ENCODE measurements at regions of chr9 and their contacts with region 1.

Region 1: GRCh38 chr9:129320575-129321263 is 142.7 kb upstream of the IER5L start:
- DNase-seq: peak; percentile 42
- ATAC-seq: peak; percentile 88
- H3K4me3 Mint-ChIP-seq: peak overlapping the region; percentile 85
- H3K27ac Mint-ChIP-seq: peak overlapping the region; percentile 52
- H3K4me1 Mint-ChIP-seq: peaks cover 13% of the 10 kb centered on the region
- H3K27me3 Mint-ChIP-seq: peaks cover 5% of the 10 kb centered on the region
- CTCF ChIP-seq: no peak

Region 2: GRCh38 chr9:129336601-129337331 is 16.0 kb after region 1 on chr9:
- CTCF ChIA-PET with region 1: no interaction called
- POLR2A ChIA-PET with region 1: interaction called, 7 read pairs
- intact Hi-C with region 1: loop called (anchors 2 kb)
- DNase-seq: peak; percentile 33
- ATAC-seq: peak; percentile 78
- H3K4me3 Mint-ChIP-seq: peak overlapping the region; percentile 75
- H3K27ac Mint-ChIP-seq: no peak overlapping the region
- H3K4me1 Mint-ChIP-seq: peaks cover 22% of the 10 kb centered on the region
- H3K27me3 Mint-ChIP-seq: peaks cover 33% of the 10 kb centered on the region
- CTCF ChIP-seq: no peak

Region 3: GRCh38 chr9:129413537-129414376 is 93.0 kb after region 1 on chr9:
- CTCF ChIA-PET with region 1: no interaction called
- POLR2A ChIA-PET with region 1: interaction called, 5 read pairs
- intact Hi-C with region 1: loop called (anchors 5 kb)
- DNase-seq: peak; percentile 99
- ATAC-seq: peak; percentile 79
- H3K4me3 Mint-ChIP-seq: peak overlapping the region; percentile 85
- H3K27ac Mint-ChIP-seq: peak overlapping the region; percentile 97
- H3K4me1 Mint-ChIP-seq: peaks cover 14% of the 10 kb centered on the region
- H3K27me3 Mint-ChIP-seq: no peaks in the 10 kb centered on the region
- CTCF ChIP-seq: no peak

Region 4: GRCh38 chr9:129610473-129611301 is 290.0 kb after region 1 on chr9:
- CTCF ChIA-PET with region 1: no interaction called
- POLR2A ChIA-PET with region 1: interaction called, 6 read pairs
- intact Hi-C with region 1: loop called (anchors 5 kb)
- DNase-seq: peak; percentile 75
- ATAC-seq: peak; percentile 82
- H3K4me3 Mint-ChIP-seq: peak overlapping the region; percentile 81
- H3K27ac Mint-ChIP-seq: peak overlapping the region; percentile 41
- H3K4me1 Mint-ChIP-seq: peaks cover 24% of the 10 kb centered on the region
- H3K27me3 Mint-ChIP-seq: peaks cover 2% of the 10 kb centered on the region
- CTCF ChIP-seq: peak; percentile 37